Activated CD4-positive, alpha-beta memory T cell treated with anti-CD3 and anti-CD28 coated beads, Interleukin-2, amount 10 ng/mL, durations not matched to agents 7 days and 5 days (primary cell): ENCODE measurements at regions of chr21 and their contacts with region 1.

Region 1: DNA sequence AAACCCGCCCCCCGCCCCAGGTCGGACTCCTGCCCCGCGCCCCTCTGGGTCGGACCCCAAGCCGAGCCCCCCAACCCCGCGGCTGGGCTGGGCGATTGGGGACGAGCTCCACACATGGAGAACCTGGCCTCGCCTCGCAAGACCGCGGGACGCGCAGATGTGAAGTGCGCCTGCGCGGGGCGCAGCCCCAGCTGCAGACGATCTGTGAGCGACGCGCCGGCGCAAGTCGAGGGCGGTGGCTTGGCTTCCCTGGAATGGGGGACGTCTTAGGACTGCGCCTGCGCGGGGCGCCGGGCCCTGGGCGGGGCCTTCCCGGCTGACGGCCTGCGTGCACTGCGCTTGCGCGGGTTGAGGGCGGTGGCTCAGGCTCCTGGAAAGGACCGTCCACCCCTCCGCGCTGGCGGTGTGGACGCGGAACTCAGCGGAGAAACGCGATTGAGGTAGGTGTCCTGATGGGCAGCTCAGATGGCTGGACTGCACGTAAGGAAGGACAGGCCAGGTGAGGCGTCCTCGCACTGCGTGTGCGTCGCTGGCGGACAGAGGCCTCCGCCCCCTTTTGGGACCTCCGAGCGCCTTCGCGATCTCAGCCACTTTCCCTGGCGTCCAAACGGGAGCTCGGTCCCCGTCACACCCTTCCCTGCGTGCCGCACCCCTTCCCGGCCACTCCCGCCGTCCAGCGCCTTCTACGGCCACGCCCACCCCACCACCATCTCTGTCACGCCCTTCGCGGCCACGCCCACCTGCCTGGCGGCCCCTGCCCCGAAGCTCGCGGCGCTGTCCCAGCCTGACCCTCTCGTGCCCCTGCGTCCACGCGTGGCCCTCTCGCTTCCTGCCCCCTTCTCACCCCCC is at the start of gene PRMT2:
- DNase-seq: peak; percentile 98
- H3K4me3 Mint-ChIP-seq: peak within 1 kb of the TSS; percentile 89
- H3K27ac Mint-ChIP-seq: peak within 1 kb of the TSS; percentile 83
- H3K4me1 Mint-ChIP-seq: peaks cover 59% of the 10 kb centered on the region
- H3K27me3 Mint-ChIP-seq: peaks cover 4% of the 10 kb centered on the region
- total RNA-seq, gene PRMT2: 97.3 to 102 TPM

Region 2: GRCh38 chr21:46124926-46125855 is 510.4 kb before region 1 on chr21:
- CTCF ChIA-PET with region 1: no interaction called
- POLR2A ChIA-PET with region 1: no interaction called
- DNase-seq: no peak
- H3K4me3 Mint-ChIP-seq: no peak overlapping the region
- H3K27ac Mint-ChIP-seq: no peak overlapping the region
- H3K4me1 Mint-ChIP-seq: no peaks in the 10 kb centered on the region
- H3K27me3 Mint-ChIP-seq: no peaks in the 10 kb centered on the region

Region 3: GRCh38 chr21:46210378-46211136 is 425.0 kb before region 1 on chr21:
- CTCF ChIA-PET with region 1: no interaction called
- POLR2A ChIA-PET with region 1: no interaction called
- DNase-seq: no peak
- H3K4me3 Mint-ChIP-seq: no peak overlapping the region
- H3K27ac Mint-ChIP-seq: no peak overlapping the region
- H3K4me1 Mint-ChIP-seq: no peaks in the 10 kb centered on the region
- H3K27me3 Mint-ChIP-seq: no peaks in the 10 kb centered on the region

Region 4: DNA sequence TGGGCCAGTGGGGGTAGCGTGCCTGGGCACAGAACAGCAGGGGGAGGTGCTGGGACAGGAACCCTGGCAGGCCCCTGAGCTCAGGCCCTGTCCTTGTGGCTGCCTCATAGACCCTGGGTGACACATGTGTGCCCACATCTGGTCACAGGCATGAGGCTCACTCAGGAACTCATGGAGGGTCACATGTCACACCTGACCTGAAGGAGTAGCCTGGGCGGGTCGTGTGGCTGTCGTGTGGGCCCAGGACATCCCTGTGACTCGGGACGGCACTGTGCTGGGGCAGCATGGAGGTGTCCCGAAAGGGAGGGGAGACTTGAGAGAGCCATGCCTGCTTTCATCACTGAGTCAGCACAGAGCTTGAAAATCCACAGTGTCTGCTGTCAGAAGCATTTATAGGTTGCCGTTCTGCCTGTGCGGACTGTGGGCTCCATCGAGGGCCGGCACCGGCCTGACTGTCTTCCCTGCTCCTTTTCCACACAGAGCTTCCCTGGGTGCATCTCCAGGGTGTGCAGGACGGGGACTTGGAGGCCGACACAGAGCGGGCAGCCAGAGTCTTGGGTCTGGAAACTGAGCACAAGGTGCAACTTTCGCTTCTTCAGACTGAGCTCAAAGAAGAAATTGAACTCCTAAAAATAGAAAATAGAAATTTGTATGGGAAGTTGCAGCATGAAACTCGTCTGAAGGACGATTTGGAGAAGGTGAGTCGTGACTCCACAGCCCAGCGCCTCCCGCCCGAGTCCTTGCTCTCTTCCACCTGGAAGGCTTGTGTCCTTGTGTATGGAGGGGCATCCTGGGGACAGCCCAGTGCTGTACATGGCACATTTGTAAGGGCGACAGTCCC is 278.8 kb before region 1 on chr21:
- CTCF ChIA-PET with region 1: no interaction called
- POLR2A ChIA-PET with region 1: no interaction called
- DNase-seq: no peak
- H3K4me3 Mint-ChIP-seq: no peak overlapping the region
- H3K27ac Mint-ChIP-seq: no peak overlapping the region
- H3K4me1 Mint-ChIP-seq: no peaks in the 10 kb centered on the region
- H3K27me3 Mint-ChIP-seq: no peaks in the 10 kb centered on the region

Region 5: DNA sequence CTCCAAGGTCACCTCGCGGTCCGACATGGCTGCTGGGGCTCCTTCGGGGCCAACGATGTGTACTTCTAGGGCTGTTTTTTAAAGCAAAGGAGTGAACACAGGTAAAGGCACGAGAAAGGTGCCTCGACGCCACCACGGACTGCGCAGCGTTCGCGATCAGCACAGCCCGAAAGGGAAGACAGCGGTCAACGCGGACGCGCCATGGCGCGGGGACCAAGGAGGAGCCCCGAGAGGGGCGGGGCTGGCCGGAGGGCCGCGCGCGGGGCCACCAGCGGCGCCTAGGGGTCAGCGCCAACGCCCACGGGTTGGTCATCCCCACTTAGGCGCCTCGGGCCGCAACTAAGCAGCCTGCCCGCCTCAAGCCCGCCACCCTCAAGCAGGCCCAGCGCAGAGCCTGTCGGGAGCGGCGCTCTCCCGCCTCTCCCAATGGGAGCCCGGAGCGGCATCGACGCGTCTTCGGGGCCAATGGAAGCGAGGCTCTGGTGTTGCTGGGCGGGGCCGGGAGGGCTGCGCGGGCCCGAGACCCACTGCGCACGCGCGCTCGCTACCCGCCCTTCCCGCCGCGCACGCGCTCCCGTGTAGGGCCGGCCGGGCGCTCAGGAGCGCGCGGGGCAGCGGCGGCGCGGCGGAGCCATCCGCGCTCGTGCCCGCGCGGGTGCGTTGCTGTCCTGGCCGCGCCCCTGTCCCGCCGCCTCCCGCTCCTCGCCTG is 177.1 kb before region 1 on chr21 and contains the start of gene DIP2A:
- CTCF ChIA-PET with region 1: interaction called, 9 read pairs
- POLR2A ChIA-PET with region 1: interaction called, 45 read pairs
- DNase-seq: peak; percentile 96
- H3K4me3 Mint-ChIP-seq: peak within 1 kb of the TSS; percentile 87
- H3K27ac Mint-ChIP-seq: peak within 1 kb of the TSS; percentile 81
- H3K4me1 Mint-ChIP-seq: peaks cover 37% of the 10 kb centered on the region
- H3K27me3 Mint-ChIP-seq: no peaks in the 10 kb centered on the region
- total RNA-seq, gene DIP2A: 52.9 to 53.2 TPM

Region 6: GRCh38 chr21:46551636-46552241 is 83.8 kb before region 1 on chr21:
- CTCF ChIA-PET with region 1: interaction called, 10 read pairs
- POLR2A ChIA-PET with region 1: interaction called, 28 read pairs
- DNase-seq: peak; percentile 35
- H3K4me3 Mint-ChIP-seq: no peak overlapping the region
- H3K27ac Mint-ChIP-seq: peak overlapping the region; percentile 84
- H3K4me1 Mint-ChIP-seq: peaks cover 46% of the 10 kb centered on the region
- H3K27me3 Mint-ChIP-seq: no peaks in the 10 kb centered on the region

Region 7: DNA sequence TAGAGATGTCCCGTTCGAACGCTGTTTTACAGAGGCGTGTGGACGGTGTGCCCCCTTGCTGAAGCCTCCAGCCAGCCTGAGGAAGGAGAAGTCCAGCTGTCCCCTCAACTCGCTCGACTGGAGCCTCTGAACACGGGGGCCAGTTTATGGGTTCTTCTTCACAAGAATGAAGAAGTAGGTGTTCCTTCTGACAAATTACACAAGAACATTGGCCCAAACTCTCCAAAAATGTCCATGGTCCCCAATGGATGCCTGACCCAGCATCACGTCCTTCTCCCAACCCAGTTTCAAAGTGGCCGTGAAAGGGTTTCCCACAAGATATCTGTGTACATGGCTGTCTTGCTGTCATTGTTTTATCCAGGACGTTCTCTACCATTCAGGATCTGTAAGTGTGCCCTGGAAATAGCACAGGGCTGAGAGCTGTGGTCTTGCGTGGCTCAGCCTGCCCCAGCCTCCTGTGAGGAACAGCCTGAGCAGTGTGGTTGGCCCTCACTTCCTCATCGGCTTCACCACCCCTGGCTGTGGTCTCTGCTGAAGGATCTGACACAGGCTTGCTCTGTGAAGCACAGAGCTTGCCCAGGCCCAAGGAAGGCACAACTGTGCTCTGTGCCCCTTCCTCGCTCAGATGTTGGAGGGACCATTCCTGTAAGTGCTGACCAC is 29.7 kb before region 1 on chr21:
- CTCF ChIA-PET with region 1: no interaction called
- POLR2A ChIA-PET with region 1: interaction called, 25 read pairs
- DNase-seq: peak; percentile 69
- H3K4me3 Mint-ChIP-seq: no peak overlapping the region
- H3K27ac Mint-ChIP-seq: peak overlapping the region; percentile 65
- H3K4me1 Mint-ChIP-seq: peaks cover 28% of the 10 kb centered on the region
- H3K27me3 Mint-ChIP-seq: no peaks in the 10 kb centered on the region

Region 8: DNA sequence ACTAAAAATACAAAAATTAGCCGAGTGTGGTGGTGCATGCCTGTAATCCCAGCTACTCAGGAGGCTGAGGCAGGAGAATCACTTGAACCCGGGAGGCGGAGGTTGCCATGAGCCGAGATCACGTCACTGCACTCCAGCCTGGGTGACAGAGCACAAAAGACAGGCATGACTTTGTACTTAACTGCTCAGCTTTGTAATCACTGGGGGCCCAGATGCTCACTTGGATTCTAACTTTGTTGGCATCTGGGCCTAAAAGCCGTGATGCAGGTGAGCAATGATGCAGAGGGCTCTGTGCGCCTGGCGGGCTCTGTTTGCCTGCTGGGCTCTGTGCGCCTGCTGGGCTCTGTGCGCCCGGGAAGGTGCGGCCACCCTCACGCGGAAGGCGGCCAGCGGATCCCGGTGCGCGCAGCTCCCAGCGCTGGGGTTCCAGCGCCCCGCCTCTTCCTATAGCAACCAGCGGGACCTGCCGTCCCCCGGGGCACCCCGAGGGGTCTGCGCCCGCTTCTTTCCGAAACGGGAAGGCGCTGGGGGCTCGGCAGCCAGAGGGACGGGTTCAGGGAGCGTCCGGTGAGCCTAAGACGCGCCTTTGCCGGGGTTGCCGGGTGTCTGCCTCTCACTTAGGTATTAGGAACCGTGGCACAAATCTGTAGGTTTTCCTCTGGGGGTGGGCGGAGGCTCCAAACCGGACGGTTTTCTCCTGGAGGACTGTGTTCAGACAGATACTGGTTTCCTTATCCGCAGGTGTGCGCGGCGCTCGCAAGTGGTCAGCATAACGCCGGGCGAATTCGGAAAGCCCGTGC is 31.6 kb after region 1 on chr21:
- CTCF ChIA-PET with region 1: no interaction called
- POLR2A ChIA-PET with region 1: interaction called, 11 read pairs
- DNase-seq: no peak
- H3K4me3 Mint-ChIP-seq: peak overlapping the region; percentile 72
- H3K27ac Mint-ChIP-seq: no peak overlapping the region
- H3K4me1 Mint-ChIP-seq: peaks cover 11% of the 10 kb centered on the region
- H3K27me3 Mint-ChIP-seq: peaks cover 32% of the 10 kb centered on the region